Sciatic nerve (tissue), 2 donors: ENCODE measurements at regions of chr6 and their contacts with region 1.

Region 1: DNA sequence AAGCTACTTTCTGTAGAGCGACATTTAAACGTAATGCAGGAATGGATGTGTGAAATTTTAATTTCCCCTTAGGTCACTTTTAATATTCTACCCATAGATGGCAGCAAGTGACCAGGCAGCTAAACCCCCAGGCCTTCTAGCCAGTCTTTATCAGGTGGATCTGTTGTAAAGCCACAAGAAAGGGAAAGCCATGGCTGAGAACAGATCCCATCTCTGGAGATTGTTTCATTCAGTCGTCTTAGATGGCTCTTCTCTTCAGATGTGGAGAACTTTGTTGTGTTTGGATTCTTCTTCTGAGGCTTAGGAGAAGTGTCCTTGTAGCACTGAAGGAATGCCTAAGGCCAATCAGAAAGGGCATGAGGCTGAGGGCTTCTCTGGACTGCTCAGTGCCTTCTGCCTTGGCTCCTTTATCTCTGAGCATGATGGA is 15.8 kb upstream of the RNF182 start:
- DNase-seq: no peak
- ATAC-seq: peak; percentile 88

Region 2: GRCh38 chr6:13941902-13942301 is 32.9 kb after region 1 on chr6:
- intact Hi-C with region 1: no loop called
- DNase-seq: no peak
- ATAC-seq: no peak

Region 3: GRCh38 chr6:14059791-14060444 is 150.9 kb after region 1 on chr6:
- intact Hi-C with region 1: loop called (anchors 10 kb)
- DNase-seq: no peak
- ATAC-seq: no peak

Region 4: GRCh38 chr6:14144678-14145113 is 235.7 kb after region 1 on chr6:
- intact Hi-C with region 1: loop called (anchors 5 kb)
- DNase-seq: peak; percentile 79
- ATAC-seq: peak; percentile 79